ENCODE measurements at regions of chr11 and their contacts with region 1.

Region 1: GRCh38 chr11:120235024-120235861 is 4.7 kb upstream of the POU2F3 start:
- DNase-seq: peak; percentile 64 to 68
- ATAC-seq: peak; percentile 82 to 91; a peak in 5 of 6 replicates
- H3K4me3 ChIP-seq: no peak overlapping the region
- H3K27ac ChIP-seq: no peak overlapping the region
- H3K4me1 ChIP-seq: no peaks in the 10 kb centered on the region
- CTCF ChIP-seq: peak; percentile 66
- EP300 ChIP-seq: no peak
- POLR2A ChIP-seq: no peak
- RAD21 ChIP-seq: peak; percentile 73 to 79

Region 2: DNA sequence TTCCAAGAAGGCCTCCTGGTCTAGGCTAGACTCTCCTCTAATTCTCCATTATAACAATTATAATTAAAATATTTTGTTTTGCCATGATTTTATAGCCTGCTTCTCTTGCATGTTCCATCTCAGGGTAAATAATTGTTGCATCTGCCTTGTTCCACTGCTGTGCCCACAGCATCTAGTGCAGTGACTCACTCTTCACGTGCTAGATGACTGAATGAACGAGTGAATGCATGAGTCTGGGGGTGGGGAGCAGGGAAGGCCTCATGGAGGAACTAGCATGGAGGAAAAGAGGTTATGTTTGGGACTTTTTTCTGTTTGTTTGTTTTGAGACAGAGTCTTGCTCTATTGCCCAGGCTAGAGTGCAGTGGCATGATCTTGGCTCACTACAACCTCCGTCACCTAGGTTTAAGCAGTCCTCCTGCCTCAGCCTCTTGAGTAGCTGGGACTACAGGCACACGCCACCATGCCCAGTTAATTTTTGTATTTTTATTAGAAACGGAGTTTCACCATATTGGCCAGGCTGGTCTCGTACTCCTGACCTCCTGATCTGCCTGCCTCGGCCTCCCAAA is 29.6 kb before region 1 on chr11:
- CTCF ChIA-PET with region 1: no interaction called
- POLR2A ChIA-PET with region 1: no interaction called
- DNase-seq: peak in 1 of 2 experiments; percentile 10
- ATAC-seq: no peak
- H3K4me3 ChIP-seq: no peak overlapping the region
- H3K27ac ChIP-seq: 0 out of 6 replicates have a peak overlapping the region, but pooled peaks of 1 of the 2 experiments have one; percentile 24
- H3K4me1 ChIP-seq: peaks cover 5% of the 10 kb centered on the region; the same call in 2 of the 3 replicates
- CTCF ChIP-seq: no peak
- EP300 ChIP-seq: no peak
- POLR2A ChIP-seq: no peak
- RAD21 ChIP-seq: no peak

Region 3: DNA sequence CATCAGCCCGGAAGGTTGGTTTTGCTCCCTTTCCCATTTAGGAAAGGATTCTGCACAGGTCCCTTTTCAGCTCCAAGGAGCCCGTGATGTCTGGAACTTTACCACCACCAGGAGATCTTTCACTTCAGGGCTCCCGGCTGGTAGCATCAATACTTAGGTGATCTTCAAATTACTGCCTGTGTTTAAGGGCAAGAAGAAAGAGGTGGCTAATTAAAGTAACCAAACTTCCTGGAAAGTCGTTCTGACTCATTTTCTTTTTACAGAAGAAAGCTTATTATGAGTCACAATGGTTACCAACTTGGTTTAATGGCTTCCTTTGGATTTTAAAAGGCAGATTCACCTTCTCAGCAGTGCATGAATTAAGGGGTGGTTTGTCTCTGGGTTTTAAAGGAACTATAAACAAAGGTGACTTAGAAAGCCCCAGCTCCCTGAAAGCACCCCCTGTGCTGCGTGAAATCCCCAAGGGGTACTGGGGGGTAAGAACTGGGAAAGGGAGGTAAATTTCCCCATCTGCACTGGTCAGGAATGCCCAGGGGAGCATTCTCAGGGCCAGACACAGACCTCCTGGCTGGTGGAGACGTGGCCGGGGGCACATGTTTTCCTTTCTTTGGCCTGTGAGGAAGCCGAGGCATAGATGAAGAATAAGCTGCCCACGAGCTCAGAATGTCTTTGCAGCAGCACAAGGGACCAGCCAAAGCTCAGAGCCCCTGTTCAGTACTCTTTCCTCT is 13.5 kb after region 1 on chr11:
- CTCF ChIA-PET with region 1: interaction called, 23 read pairs
- POLR2A ChIA-PET with region 1: no interaction called
- DNase-seq: no peak
- ATAC-seq: no peak
- H3K4me3 ChIP-seq: no peak overlapping the region
- H3K27ac ChIP-seq: no peak overlapping the region
- H3K4me1 ChIP-seq: no peaks in the 10 kb centered on the region
- CTCF ChIP-seq: no peak
- EP300 ChIP-seq: no peak
- POLR2A ChIP-seq: no peak
- RAD21 ChIP-seq: no peak

Region 4: GRCh38 chr11:120295084-120295483 is 59.8 kb after region 1 on chr11:
- CTCF ChIA-PET with region 1: interaction called, 407 read pairs
- POLR2A ChIA-PET with region 1: no interaction called
- DNase-seq: no peak
- ATAC-seq: no peak
- H3K4me3 ChIP-seq: no peak overlapping the region
- H3K27ac ChIP-seq: no peak overlapping the region
- H3K4me1 ChIP-seq: peaks cover 6% of the 10 kb centered on the region; the same call in 2 of the 3 replicates
- CTCF ChIP-seq: no peak
- EP300 ChIP-seq: no peak
- POLR2A ChIP-seq: no peak
- RAD21 ChIP-seq: no peak

Measured in A549 (cell line).